ENCODE measurements at regions of chr15 and their contacts with region 1.

Region 1: GRCh38 chr15:89358755-89359439 is 24.3 kb upstream of the POLG start:
- DNase-seq: peak; percentile 94

Region 2: GRCh38 chr15:89334510-89335288 is 24.2 kb before region 1 on chr15 and contains the start of gene POLG:
- CTCF ChIA-PET with region 1: interaction called, 20 read pairs
- POLR2A ChIA-PET with region 1: interaction called, 4 read pairs
- DNase-seq: peak; percentile 98

Region 3: DNA sequence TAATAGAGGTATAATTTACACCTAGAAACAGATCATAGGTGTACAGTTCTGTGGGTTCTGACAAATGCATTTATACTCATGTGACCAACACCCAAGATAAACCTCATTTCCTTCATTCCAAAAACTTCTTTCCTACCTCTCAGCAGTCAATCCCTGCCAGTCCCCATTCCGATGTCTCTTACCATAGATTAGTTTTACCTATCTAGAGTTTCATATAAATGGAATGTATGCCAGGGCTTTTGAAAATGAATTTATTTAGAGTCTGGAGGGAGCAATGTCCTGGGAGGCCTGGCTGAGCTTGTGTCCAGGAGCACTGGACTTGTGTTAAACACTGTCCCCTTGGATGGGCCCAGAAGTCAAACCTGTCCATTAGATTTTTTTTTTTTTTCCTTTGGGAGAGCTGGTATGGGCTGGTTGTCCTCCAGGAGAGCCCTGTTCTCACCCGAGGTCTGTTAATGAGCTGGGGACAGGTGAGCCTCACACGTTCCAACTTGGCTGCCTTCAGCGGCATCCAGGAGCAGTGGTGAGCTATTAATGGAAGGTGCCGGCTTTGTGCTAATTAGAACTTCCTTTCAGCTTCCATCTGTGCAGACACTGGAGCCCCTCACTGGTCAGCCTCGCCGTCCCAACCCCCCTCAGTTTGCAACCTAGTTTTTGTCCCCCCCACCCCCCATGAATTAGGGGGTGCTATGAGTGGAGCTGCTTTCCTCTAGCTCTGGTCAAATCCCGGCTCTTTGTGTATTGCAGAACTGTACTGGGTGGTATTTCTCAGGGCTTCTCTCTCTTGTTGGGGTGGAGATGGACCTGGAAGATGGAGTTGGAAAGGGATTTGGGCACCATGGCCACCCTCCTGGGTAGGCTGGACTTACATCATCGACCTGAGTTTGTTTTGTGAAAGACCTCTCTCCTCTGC is 16.5 kb after region 1 on chr15:
- CTCF ChIA-PET with region 1: interaction called, 21 read pairs
- POLR2A ChIA-PET with region 1: interaction called, 5 read pairs
- DNase-seq: no peak

Region 4: GRCh38 chr15:89399238-89400120 is 40.6 kb after region 1 on chr15:
- CTCF ChIA-PET with region 1: interaction called, 96 read pairs
- POLR2A ChIA-PET with region 1: interaction called, 5 read pairs
- DNase-seq: peak; percentile 72

Region 5: GRCh38 chr15:89416141-89416853 is 57.4 kb after region 1 on chr15:
- CTCF ChIA-PET with region 1: interaction called, 80 read pairs
- POLR2A ChIA-PET with region 1: no interaction called
- DNase-seq: peak; percentile 95

Region 6: GRCh38 chr15:89442671-89443307 is 83.9 kb after region 1 on chr15:
- CTCF ChIA-PET with region 1: interaction called, 18 read pairs
- POLR2A ChIA-PET with region 1: interaction called, 3 read pairs
- DNase-seq: peak; percentile 86

Measured in HEK293T (cell line).